ENCODE measurements at regions of chr9 and their contacts with region 1.

Region 1: DNA sequence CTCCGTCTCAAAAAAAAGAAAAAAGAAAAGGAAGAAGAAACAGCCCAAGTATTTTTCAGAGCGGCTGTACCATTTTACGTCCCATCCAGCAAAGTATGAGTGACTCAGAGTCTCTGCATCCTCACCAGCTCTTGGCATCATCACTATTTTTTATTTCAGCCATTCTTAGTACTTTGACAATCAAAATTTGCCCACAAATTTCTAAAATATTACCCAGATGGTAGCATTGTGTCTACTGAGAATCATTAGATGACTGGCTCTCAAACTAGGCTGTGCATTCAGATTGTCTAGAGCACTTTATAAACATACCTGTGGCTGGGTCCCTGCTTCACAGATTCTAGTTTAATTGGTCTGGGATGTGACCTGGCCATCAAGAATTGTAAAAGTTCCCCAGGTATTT is 21.6 kb upstream of the MELK start:
- DNase-seq: no peak
- ATAC-seq: no peak

Region 2: GRCh38 chr9:36400332-36401163 is 150.6 kb before region 1 on chr9:
- intact Hi-C with region 1: loop called (anchors 1 kb)
- DNase-seq: peak; percentile 96
- ATAC-seq: peak; percentile 94

Region 3: DNA sequence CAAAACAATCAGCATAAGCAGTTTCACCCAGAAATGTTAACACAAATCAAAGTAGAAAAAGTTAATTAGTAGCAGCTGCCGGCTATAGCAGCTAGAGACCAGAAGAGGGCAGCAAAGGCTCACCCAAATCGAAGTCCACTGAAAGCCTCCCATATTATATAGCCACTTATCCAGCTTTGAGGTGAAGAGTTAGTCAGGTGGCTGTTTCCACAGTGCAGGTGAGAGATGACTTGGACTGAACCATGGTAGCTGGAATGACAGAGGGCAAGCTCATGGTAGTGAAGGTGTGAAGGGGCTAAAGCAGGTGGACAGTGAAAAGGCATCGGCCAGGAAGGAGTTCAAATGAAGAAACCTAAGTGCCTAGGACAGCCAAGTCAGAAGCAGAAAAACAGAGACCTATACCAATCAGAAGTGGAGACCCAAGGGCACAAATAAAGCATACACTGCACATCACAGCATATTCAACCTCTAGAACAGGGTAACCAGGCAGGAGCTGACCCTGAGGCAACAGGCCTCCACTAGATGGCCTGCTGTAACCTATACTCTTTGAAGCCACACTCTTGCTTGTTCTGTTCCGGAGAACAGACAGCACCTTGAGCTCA is 143.9 kb before region 1 on chr9:
- intact Hi-C with region 1: loop called (anchors 1 kb)
- DNase-seq: no peak
- ATAC-seq: peak; percentile 82

Region 4: DNA sequence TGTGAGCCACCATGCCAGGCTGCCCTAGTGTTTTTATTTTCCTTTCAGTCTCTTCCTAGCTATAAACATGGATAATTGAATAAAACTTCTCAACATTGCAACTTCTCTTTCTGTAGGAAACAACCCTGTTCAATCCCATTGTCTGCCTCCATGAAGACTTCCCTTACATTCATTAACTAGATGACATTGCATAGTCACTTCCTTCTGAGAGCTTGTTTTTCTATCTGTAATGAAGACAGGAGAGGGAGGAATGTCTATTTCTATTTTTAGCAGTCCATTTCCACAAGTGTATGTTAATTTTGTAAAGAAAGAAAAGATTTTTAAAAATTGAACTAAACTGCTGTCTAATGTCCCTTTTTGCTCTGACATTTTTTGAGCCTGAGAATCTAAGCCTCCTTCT is 34.0 kb before region 1 on chr9:
- intact Hi-C with region 1: loop called (anchors 5 kb)
- DNase-seq: no peak
- ATAC-seq: no peak

Region 5: GRCh38 chr9:37053684-37054362 is 502.7 kb after region 1 on chr9:
- intact Hi-C with region 1: no loop called
- DNase-seq: no peak
- ATAC-seq: no peak

Measured in Right ventricle myocardium inferior (tissue), 1 donor.